CD8-positive, alpha-beta T cell (primary cell): ENCODE measurements at regions of chr3 and their contacts with region 1.

Region 1: GRCh38 chr3:45043728-45044299 is 17.7 kb downstream of the CLEC3B start:
- DNase-seq: no peak
- ATAC-seq: no peak
- H3K4me3 ChIP-seq: no peak overlapping the region
- H3K4me3 Mint-ChIP-seq: no peak overlapping the region
- H3K27ac ChIP-seq: no peak overlapping the region
- H3K27ac Mint-ChIP-seq: no peak overlapping the region
- H3K4me1 ChIP-seq: no peaks in the 10 kb centered on the region
- H3K4me1 Mint-ChIP-seq: peaks cover 12% of the 10 kb centered on the region
- H3K27me3 ChIP-seq: no peaks in the 10 kb centered on the region
- H3K27me3 Mint-ChIP-seq: peaks cover 29% of the 10 kb centered on the region
- CTCF ChIP-seq: no peak

Region 2: DNA sequence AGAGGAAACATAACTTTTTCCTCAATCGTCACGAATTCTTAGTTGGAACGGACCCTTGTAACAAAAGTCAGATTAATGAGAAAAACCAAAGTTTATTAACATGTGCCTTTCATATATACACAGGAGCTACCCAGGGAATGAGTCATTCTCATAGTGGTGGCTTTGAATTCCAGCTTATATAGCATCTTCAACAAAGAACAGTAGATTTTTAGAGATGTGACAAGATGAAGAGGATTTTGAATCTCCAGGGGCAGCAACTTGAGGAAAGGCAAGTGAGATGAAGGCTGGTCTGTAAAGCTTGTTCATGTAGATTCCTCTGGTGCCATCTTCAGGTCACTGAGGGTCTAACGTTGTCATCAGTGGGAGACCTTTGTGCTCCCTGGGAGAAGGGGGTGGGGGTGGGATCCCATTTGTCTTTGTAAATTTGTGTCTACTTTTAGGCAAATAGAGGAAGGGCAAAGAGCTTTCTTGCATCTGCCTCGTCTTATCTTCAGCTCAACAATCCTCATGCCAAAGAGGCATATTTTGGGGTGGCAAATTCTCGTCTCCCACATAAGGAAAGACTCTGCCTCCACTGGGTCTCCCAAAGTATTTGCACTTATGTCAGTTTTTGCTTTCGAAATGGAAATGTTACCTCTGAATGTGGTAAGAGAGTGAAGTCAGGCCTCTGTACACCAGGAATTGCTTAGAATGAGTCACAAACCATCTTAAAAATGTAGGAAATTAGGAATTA is 11.8 kb after region 1 on chr3:
- CTCF ChIA-PET with region 1: interaction called, 40 read pairs
- POLR2A ChIA-PET with region 1: no interaction called
- intact Hi-C with region 1: no loop called
- DNase-seq: peak in 2 of 9 experiments; percentile 23 to 39
- ATAC-seq: no peak
- H3K4me3 ChIP-seq: no peak overlapping the region
- H3K4me3 Mint-ChIP-seq: no peak overlapping the region
- H3K27ac ChIP-seq: no peak overlapping the region
- H3K27ac Mint-ChIP-seq: no peak overlapping the region
- H3K4me1 ChIP-seq: no peaks in the 10 kb centered on the region
- H3K4me1 Mint-ChIP-seq: no peaks in the 10 kb centered on the region
- H3K27me3 ChIP-seq: peaks cover 0 to 2% of the 10 kb centered on the region in 2 experiments
- H3K27me3 Mint-ChIP-seq: peaks cover 10% of the 10 kb centered on the region
- CTCF ChIP-seq: no peak

Region 3: DNA sequence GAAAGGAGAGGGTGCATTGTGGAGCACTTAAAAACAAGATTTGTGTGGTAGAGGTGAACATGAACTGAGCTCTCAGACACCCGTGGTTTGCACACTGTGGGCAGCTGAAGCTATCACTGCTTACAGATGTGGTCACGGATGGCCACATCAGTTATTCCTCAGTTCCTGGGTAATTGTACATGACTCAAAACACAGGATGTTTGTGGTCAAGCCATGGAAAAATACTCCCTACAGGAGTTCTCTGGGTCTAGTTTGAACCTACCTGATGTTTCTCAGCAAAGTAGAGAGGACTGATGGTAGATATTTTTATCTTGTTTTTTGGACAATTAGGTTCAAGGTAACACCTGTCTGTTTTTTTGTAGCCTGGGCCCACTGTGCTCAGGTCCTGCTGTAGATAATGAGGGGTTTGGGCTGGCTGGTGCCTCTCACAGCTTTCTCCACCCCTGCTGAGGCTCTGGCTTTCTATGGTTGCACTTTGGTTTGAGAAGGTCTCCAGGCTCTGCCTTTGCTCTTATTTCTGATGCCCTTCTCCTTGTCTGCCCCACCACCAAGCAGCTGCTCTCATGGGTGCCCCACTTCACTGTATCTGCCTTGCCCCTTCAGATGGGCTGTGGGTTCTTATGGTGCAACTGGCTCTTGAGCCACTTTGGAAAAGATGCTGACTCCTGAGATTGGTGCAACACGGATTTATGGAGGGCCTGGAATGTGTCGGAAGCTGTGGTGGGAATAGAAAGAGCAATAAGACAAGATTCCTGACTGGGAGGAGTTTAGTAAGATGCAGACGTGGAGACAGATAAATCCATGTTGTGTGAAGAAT is 62.2 kb after region 1 on chr3:
- CTCF ChIA-PET with region 1: interaction called, 3 read pairs
- POLR2A ChIA-PET with region 1: no interaction called
- intact Hi-C with region 1: loop called in 1 of 2 experiments (anchors 5 kb)
- DNase-seq: peak; percentile 18 to 77 (median 64)
- ATAC-seq: peak; percentile 74
- H3K4me3 ChIP-seq: no peak overlapping the region
- H3K4me3 Mint-ChIP-seq: peak overlapping the region; percentile 2
- H3K27ac ChIP-seq: no peak overlapping the region
- H3K27ac Mint-ChIP-seq: no peak overlapping the region
- H3K4me1 ChIP-seq: peaks cover 60% of the 10 kb centered on the region
- H3K4me1 Mint-ChIP-seq: peaks cover 66% of the 10 kb centered on the region
- H3K27me3 ChIP-seq: peaks cover 0 to 16% of the 10 kb centered on the region in 2 experiments
- H3K27me3 Mint-ChIP-seq: peaks cover 15% of the 10 kb centered on the region
- CTCF ChIP-seq: no peak

Region 4: GRCh38 chr3:45224824-45225464 is 181.1 kb after region 1 on chr3:
- CTCF ChIA-PET with region 1: interaction called, 12 read pairs
- POLR2A ChIA-PET with region 1: no interaction called
- intact Hi-C with region 1: no loop called
- DNase-seq: peak in 4 of 9 experiments; percentile 9 to 50 (median 24)
- ATAC-seq: no peak
- H3K4me3 ChIP-seq: no peak overlapping the region
- H3K4me3 Mint-ChIP-seq: peak overlapping the region; percentile 80
- H3K27ac ChIP-seq: no peak overlapping the region
- H3K27ac Mint-ChIP-seq: no peak overlapping the region
- H3K4me1 ChIP-seq: peaks cover 8% of the 10 kb centered on the region
- H3K4me1 Mint-ChIP-seq: peaks cover 11% of the 10 kb centered on the region
- H3K27me3 ChIP-seq: peaks cover 22 to 28% of the 10 kb centered on the region in 2 experiments
- H3K27me3 Mint-ChIP-seq: peaks cover 64% of the 10 kb centered on the region
- CTCF ChIP-seq: no peak